Ascending aorta (tissue), 2 donors: ENCODE measurements at regions of chr12 and their contacts with region 1.

Region 1: GRCh38 chr12:104671407-104672098 is 214.8 kb downstream of the CHST11 start:
- DNase-seq: peak; percentile 84 to 96
- H3K4me3 ChIP-seq: peak overlapping the region in 1 of 2 donors; percentile 14
- H3K27ac ChIP-seq: peak overlapping the region; percentile 72 to 85
- H3K4me1 ChIP-seq: peaks cover 25 to 55% of the 10 kb centered on the region in 2 donors
- H3K27me3 ChIP-seq: no peaks in the 10 kb centered on the region
- CTCF ChIP-seq: no peak

Region 2: GRCh38 chr12:104097954-104098353 is 573.6 kb before region 1 on chr12:
- intact Hi-C with region 1: no loop called
- DNase-seq: no peak
- H3K4me3 ChIP-seq: no peak overlapping the region
- H3K27ac ChIP-seq: no peak overlapping the region
- H3K4me1 ChIP-seq: no peaks in the 10 kb centered on the region
- H3K27me3 ChIP-seq: no peaks in the 10 kb centered on the region
- CTCF ChIP-seq: no peak

Region 3: GRCh38 chr12:104381731-104382480 is 289.6 kb before region 1 on chr12:
- intact Hi-C with region 1: loop called (anchors 5 kb)
- DNase-seq: peak; percentile 16 to 85
- H3K4me3 ChIP-seq: peak overlapping the region in 1 of 2 donors; percentile 15
- H3K27ac ChIP-seq: no peak overlapping the region
- H3K4me1 ChIP-seq: peaks cover 0 to 8% of the 10 kb centered on the region in 2 donors
- H3K27me3 ChIP-seq: no peaks in the 10 kb centered on the region
- CTCF ChIP-seq: peak; percentile 88 to 93 (median 93)

Region 4: DNA sequence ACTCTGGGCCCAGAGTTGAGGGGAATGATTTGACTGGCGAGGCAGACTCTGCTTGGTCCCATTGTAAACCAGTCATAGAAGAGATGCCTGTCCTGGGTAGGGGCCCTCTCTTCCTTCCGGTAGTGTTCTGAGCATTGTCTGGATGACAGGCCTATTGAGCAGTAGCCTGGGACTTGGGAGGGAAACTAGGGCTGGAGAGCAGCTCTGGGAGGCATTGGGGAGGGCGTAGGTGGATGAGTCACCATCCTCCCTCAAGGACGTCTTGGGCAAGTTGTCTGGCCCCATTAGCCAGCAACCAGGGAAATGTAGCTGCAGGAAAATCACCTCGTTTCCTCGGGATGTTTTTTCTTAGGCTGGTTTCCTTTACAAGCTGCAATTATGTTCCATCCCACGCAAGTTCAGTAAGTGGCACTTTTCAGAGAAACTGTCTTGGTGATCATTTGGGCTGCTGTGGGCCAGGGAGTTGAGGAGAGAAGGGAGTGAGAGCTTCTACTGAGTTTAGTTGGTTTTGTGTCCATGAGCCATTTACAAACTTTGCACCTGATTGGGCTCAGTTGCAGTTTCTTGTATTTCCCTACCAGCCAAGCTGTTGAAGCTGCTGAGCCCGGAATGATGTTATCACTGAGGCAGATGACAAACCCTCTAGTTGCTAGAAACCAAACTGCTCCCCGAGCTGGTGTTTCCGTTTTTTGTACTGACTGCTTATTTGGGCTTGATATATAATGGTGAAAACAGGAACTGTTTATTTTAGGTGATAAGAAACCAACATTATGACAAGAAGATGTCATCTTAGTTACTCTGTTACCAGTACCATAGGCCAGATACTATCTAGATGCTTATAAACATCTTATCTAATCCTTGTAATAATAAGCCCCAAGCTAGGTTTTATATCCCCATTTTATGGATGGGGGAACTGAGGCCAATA is 67.2 kb before region 1 on chr12:
- intact Hi-C with region 1: loop called (anchors 5 kb)
- DNase-seq: peak; percentile 70 to 91
- H3K4me3 ChIP-seq: peak overlapping the region in 1 of 2 donors; percentile 30
- H3K27ac ChIP-seq: peak overlapping the region; percentile 74 to 81
- H3K4me1 ChIP-seq: peaks cover 0 to 22% of the 10 kb centered on the region in 2 donors
- H3K27me3 ChIP-seq: no peaks in the 10 kb centered on the region
- CTCF ChIP-seq: no peak

Region 5: DNA sequence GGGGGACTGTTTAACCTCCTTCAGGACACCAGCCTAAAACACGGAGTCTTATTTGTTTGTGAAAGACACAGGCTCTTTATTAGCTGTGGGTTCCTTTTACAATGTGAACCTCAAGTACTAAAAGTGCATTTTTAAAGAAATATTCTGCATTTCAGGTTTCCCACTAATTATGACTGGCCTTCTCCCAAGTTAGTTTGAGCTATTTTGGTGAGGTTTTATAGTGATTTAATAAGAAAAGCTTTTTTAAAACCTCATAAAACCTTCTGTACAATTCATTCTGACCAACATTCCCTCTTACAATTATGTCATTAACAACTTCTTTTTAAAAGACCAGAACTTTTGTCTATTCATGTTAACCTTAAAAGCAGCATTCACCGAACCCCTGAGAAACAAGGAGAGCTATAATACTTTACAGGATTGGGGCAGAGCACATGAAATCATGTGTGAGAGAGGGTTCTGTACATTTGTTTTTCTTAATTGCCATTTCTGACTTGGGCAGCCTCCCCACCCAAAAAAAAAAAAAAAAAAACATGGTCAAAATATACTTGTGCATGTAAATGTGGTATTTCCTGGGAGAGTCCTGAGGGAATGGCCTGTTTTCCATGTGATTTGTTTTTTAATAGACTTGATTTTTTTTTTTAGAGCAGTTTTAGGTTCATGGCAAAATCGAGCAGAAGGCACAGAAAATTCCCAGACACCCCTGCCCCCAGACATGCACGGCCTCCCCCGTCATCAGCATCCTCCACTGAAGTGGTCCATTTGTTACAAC is 45.3 kb before region 1 on chr12:
- intact Hi-C with region 1: loop called (anchors 5 kb)
- DNase-seq: no peak
- H3K4me3 ChIP-seq: no peak overlapping the region
- H3K27ac ChIP-seq: peak overlapping the region; percentile 6 to 77
- H3K4me1 ChIP-seq: peaks cover 0 to 12% of the 10 kb centered on the region in 2 donors
- H3K27me3 ChIP-seq: no peaks in the 10 kb centered on the region
- CTCF ChIP-seq: no peak

Region 6: DNA sequence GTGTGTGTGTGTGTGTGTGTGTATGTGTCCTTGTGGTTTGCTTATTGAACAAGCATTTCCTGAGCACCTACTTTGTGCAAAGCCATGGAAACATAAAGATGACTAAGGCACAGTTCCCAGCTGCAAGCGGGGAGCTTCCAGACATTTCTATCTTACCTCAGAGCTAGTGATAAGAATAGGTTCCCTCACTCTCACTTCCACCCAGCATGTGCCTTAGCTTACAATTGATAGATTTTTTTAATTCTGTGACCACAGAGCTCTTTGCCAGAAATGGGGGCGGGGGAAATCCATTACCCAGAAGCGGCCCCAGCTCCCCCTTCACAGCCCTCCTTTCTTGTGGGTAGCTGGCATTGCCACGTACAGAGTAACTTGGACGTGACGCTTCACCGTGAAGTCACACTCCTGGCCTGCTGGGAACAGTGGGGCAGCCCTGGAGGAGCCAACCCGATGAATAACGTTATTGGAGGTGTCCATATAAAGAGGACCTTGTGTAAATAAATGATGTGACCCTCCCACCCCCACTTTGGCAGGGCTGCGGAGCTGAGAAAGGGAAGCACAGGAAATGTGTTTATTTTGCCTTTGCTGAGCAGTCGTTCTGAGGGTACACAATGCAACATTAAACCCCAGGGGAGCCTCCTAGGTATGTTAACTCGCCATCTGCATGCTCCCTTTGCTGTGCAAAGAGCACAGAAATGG is 24.0 kb after region 1 on chr12:
- intact Hi-C with region 1: loop called (anchors 1 kb)
- DNase-seq: peak; percentile 62 to 91
- H3K4me3 ChIP-seq: no peak overlapping the region
- H3K27ac ChIP-seq: peak overlapping the region; percentile 25 to 41
- H3K4me1 ChIP-seq: peaks cover 3 to 23% of the 10 kb centered on the region in 2 donors
- H3K27me3 ChIP-seq: no peaks in the 10 kb centered on the region
- CTCF ChIP-seq: no peak

Region 7: GRCh38 chr12:104748356-104749128 is 77.0 kb after region 1 on chr12:
- intact Hi-C with region 1: loop called (anchors 2 kb)
- DNase-seq: peak in 1 of 2 donors; percentile 88
- H3K4me3 ChIP-seq: no peak overlapping the region
- H3K27ac ChIP-seq: peak overlapping the region; percentile 73 to 78
- H3K4me1 ChIP-seq: peaks cover 0 to 9% of the 10 kb centered on the region in 2 donors
- H3K27me3 ChIP-seq: no peaks in the 10 kb centered on the region
- CTCF ChIP-seq: no peak

Region 8: DNA sequence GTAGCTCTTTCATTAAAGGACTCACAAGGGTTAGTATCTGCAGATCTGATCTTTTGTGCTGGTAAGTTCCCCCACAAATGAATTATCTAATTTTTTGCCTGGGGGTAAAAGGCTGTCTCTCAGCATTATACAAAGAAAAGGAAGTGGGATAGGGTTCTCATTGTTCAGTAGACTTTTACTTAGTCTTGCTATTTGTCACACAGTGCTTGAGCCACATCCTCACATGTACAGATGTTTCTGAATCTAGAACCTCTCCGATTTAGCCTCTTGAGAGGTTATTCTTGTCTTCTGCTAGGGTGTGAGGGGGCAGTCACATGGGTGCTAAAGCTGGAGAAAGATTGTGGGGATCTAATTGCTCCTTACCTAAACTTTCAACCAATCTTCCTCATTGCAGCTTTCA is 193.5 kb after region 1 on chr12:
- intact Hi-C with region 1: loop called (anchors 5 kb)
- DNase-seq: no peak
- H3K4me3 ChIP-seq: no peak overlapping the region
- H3K27ac ChIP-seq: peak overlapping the region; percentile 64 to 92
- H3K4me1 ChIP-seq: peaks cover 21 to 47% of the 10 kb centered on the region in 2 donors
- H3K27me3 ChIP-seq: no peaks in the 10 kb centered on the region
- CTCF ChIP-seq: no peak